ENCODE measurements at regions of chr1 and their contacts with region 1.

Region 1: GRCh38 chr1:25487628-25488027 is 55.8 kb upstream of the LDLRAP1 start:
- DNase-seq: no peak
- ATAC-seq: peak; percentile 74
- H3K4me3 ChIP-seq: no peak overlapping the region
- H3K27ac ChIP-seq: no peak overlapping the region
- H3K4me1 ChIP-seq: no peaks in the 10 kb centered on the region
- H3K27me3 ChIP-seq: no peaks in the 10 kb centered on the region
- CTCF ChIP-seq: peak; percentile 37 to 63 (median 49); a peak in 5 of 6 replicates
- EP300 ChIP-seq: no peak
- POLR2A ChIP-seq: no peak
- RAD21 ChIP-seq: peak; percentile 31; the same call in 1 of the 2 replicates

Region 2: DNA sequence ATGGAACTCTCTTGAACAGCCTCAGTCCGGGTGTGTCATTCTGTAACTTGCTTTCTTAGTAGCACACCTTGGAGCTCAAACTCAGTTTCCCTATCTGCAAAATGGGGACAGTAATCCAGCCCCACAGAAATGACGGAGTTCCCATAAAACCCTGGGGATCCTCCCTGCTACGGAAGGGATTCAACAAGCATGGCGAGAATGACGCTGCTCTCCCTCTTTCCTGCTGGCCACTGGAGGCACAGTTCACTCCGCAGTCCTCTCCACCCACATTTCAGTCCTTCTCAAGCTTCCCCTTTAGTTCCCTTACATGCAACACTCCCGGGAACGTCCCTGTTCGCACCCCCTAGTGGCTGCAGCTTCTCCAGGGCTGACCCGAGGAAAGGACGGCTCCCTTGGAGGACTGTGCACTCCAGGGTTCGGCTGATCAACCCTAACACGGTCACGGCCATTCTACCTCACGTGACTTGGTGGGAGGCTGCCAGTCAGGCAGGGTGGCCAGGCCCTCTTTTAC is 578.2 kb before region 1 on chr1:
- CTCF ChIA-PET with region 1: no interaction called
- POLR2A ChIA-PET with region 1: no interaction called
- RAD21 ChIA-PET with region 1: no interaction called
- SMC1A ChIA-PET with region 1: no interaction called
- in situ Hi-C with region 1: no loop called
- intact Hi-C with region 1: no loop called
- DNase-seq: no peak
- ATAC-seq: no peak
- H3K4me3 ChIP-seq: no peak overlapping the region
- H3K27ac ChIP-seq: no peak overlapping the region
- H3K4me1 ChIP-seq: no peaks in the 10 kb centered on the region
- H3K27me3 ChIP-seq: no peaks in the 10 kb centered on the region
- CTCF ChIP-seq: 0 out of 6 replicates have a peak, but pooled peaks of 1 of the 3 experiments have one; percentile 3
- EP300 ChIP-seq: no peak
- POLR2A ChIP-seq: peak; percentile 54; the same call in 1 of the 2 replicates
- RAD21 ChIP-seq: no peak

Region 3: DNA sequence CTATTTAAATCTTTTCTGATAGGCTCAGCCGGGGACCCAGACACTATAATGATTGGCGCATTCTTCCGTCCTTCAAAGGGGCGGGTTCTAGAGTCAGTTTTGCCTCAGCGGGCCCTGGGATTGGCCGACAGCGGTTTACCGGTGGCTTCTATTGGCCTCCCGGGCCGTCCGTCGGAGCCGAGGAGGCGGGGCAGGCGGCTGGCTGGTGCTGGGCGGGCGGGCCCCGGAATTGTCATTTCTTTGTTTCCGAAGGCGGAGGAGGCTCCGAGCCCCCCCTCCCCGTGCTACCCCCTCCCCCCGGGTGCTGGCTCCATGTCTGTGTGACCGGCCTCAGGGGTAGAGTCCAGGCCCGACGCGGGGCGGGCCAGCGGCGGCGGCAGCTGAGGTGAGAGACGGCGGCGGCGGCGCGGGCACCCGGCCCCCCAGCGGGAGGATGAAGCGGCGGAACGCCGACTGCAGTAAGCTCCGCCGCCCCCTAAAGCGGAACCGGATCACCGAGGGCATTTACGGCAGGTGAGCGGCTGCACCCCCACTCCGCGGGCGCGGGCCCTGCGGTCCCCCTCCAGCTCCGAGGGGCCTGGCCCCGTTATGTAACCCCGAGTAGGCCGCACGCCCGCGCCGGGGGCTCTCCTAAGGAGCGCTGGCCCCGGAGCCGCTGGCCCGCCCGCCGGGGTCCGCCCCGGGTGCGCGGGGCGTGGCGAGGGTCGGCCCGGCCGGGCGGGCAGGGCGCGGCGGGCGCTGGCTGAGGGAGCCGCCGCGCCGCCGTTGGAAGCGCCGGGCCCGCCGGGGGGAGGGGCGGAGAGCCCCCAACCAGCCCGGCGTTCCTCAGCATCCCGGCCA is 56.7 kb before region 1 on chr1 and contains the start of gene MACO1:
- CTCF ChIA-PET with region 1: interaction called, 36 read pairs
- POLR2A ChIA-PET with region 1: interaction called, 5 read pairs
- RAD21 ChIA-PET with region 1: interaction called, 12 read pairs
- SMC1A ChIA-PET with region 1: interaction called, 69 read pairs
- in situ Hi-C with region 1: no loop called
- intact Hi-C with region 1: loop called (anchors 2 kb)
- DNase-seq: peak; percentile 75
- ATAC-seq: peak; percentile 94
- H3K4me3 ChIP-seq: peak within 1 kb of the TSS; percentile 79
- H3K27ac ChIP-seq: peak within 1 kb of the TSS; percentile 56
- H3K4me1 ChIP-seq: peaks cover 7% of the 10 kb centered on the region
- H3K27me3 ChIP-seq: no peaks in the 10 kb centered on the region
- CTCF ChIP-seq: no peak
- EP300 ChIP-seq: no peak
- POLR2A ChIP-seq: peak; percentile 58; the same call in 1 of the 2 replicates
- RAD21 ChIP-seq: no peak
- polyA plus RNA-seq, gene MACO1: 3.2 to 4.2 TPM

Region 4: GRCh38 chr1:25447547-25447946 is 40.1 kb before region 1 on chr1:
- CTCF ChIA-PET with region 1: interaction called, 49 read pairs
- POLR2A ChIA-PET with region 1: interaction called, 4 read pairs
- RAD21 ChIA-PET with region 1: interaction called, 6 read pairs
- SMC1A ChIA-PET with region 1: interaction called, 6 read pairs
- in situ Hi-C with region 1: no loop called
- intact Hi-C with region 1: no loop called
- DNase-seq: peak; percentile 79
- ATAC-seq: peak; percentile 94
- H3K4me3 ChIP-seq: no peak overlapping the region
- H3K27ac ChIP-seq: peak overlapping the region; percentile 62; the same call in 1 of the 2 replicates
- H3K4me1 ChIP-seq: peaks cover 37% of the 10 kb centered on the region
- H3K27me3 ChIP-seq: no peaks in the 10 kb centered on the region
- CTCF ChIP-seq: no peak
- EP300 ChIP-seq: peak; percentile 70 to 93
- POLR2A ChIP-seq: no peak
- RAD21 ChIP-seq: no peak

Region 5: DNA sequence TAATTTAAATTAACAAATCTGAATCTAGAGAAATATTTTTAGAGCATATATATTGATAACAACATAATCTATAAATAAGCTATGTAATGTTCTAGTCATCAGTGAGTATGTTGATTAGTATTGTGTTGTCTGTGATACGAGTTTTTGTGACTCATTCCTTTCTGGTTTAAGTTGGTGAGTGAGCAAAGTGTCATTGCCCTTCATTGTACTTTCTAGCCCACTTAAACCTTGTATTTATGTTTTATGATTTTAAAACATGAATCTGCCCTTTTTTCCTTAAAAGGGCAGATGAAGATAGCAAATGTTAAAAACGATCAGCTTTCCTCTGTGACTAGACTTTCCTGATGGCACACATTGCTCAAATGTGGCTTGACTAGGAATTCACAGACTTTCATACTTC is 18.5 kb before region 1 on chr1:
- CTCF ChIA-PET with region 1: interaction called, 20 read pairs
- POLR2A ChIA-PET with region 1: no interaction called
- RAD21 ChIA-PET with region 1: interaction called, 7 read pairs
- SMC1A ChIA-PET with region 1: interaction called, 6 read pairs
- in situ Hi-C with region 1: no loop called
- intact Hi-C with region 1: no loop called
- DNase-seq: no peak
- ATAC-seq: no peak
- H3K4me3 ChIP-seq: no peak overlapping the region
- H3K27ac ChIP-seq: no peak overlapping the region
- H3K4me1 ChIP-seq: peaks cover 11% of the 10 kb centered on the region
- H3K27me3 ChIP-seq: no peaks in the 10 kb centered on the region
- CTCF ChIP-seq: no peak
- EP300 ChIP-seq: no peak
- POLR2A ChIP-seq: no peak
- RAD21 ChIP-seq: no peak

Region 6: DNA sequence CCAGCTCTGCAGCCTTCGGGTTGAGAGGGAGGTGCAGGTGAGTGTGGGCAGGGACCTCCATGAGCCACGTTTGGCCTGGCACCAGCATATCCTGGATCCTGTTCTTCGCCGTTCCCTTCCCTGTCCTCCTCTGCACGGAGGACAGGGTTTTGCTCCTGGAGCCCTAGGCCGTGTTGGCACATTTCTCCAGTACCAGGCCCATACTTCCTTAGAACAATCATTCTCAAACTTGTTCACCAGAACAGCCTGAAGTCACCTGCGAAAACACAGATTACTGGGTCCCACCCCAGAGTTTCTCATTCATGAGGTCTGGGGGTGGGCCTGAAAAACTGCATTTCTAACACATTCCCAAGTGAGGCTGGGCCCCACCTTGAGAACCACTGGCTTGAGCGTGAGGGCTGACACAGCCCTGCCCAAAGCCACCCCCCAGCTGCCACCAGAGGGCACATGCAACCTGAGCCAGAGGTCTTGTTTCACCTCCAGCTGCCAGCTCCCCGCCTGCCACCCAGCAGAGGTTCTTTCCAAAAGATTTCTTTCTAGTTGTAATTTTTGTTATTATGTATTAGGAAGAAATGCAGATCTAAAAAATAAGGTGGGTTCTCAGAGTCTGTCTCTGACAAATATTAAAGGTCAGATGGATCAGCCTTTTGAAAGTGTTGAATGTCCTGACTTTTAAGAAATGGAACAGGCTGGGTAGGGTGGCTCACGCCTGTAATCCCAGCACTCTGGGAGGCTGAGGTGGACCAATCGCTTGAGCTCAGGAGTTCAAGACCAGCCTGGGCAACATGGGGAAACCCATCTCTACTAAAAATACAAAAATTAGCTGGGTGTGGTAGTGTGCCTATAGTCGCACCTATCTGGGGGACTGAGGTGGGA is 16.2 kb after region 1 on chr1:
- CTCF ChIA-PET with region 1: interaction called, 38 read pairs
- POLR2A ChIA-PET with region 1: no interaction called
- RAD21 ChIA-PET with region 1: no interaction called
- SMC1A ChIA-PET with region 1: interaction called, 13 read pairs
- in situ Hi-C with region 1: no loop called
- intact Hi-C with region 1: no loop called
- DNase-seq: no peak
- ATAC-seq: peak; percentile 98
- H3K4me3 ChIP-seq: no peak overlapping the region
- H3K27ac ChIP-seq: no peak overlapping the region
- H3K4me1 ChIP-seq: no peaks in the 10 kb centered on the region
- H3K27me3 ChIP-seq: no peaks in the 10 kb centered on the region
- CTCF ChIP-seq: peak; percentile 56 to 72 (median 71)
- EP300 ChIP-seq: no peak
- POLR2A ChIP-seq: no peak
- RAD21 ChIP-seq: peak; percentile 40; the same call in 1 of the 2 replicates

Region 7: DNA sequence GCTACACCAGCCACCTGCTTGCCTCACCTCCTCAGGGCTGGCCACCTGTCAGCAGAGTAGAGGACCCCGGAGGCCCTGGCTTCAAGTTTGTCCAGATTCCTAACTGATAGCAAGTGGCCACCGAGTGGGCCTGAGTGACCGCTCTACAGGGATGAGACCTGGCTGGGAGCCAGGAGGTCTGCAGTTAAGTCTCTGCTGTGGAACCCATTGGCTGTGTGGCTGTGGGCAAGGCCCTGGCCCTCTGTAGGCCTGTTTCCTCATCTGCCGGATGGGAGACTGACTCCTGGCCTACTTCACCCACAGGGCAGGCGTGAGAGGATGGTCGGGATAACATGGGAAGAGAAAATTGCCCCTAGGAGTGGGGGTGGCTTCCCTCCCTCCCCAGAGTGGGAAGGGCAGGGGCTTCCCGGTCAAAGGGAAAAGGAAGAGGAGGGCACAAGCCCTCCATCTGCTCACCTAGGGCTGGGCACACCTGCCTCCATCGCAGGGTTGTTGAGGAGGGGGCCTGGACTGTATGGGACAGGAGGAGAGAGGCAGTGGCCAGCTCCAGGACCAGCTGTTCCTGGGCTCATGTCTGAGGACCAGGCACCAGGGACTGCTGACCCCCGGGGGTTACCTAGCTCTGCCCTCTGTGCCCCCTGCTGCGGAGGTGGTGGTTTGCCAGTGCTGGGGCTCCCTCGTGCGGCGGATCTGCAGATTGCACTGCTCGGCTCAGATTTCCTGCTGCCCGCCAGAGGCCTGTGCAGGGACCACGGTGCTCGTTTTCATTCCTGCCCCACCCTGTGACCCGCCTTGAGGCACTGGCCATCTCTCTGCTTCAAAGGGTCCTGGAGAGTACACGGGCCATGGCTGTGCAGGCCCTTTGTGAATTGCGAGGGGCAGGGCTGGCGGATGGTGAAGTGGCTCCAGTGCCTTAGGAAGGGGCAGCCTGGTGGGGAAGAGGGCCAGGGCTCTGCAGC is 323.0 kb after region 1 on chr1:
- CTCF ChIA-PET with region 1: interaction called, 10 read pairs
- POLR2A ChIA-PET with region 1: no interaction called
- RAD21 ChIA-PET with region 1: no interaction called
- SMC1A ChIA-PET with region 1: interaction called, 5 read pairs
- in situ Hi-C with region 1: no loop called
- intact Hi-C with region 1: no loop called
- DNase-seq: no peak
- ATAC-seq: peak; percentile 91
- H3K4me3 ChIP-seq: no peak overlapping the region
- H3K27ac ChIP-seq: no peak overlapping the region
- H3K4me1 ChIP-seq: peaks cover 7% of the 10 kb centered on the region
- H3K27me3 ChIP-seq: no peaks in the 10 kb centered on the region
- CTCF ChIP-seq: peak; percentile 86 to 97 (median 95); a peak in 5 of 6 replicates
- EP300 ChIP-seq: no peak
- POLR2A ChIP-seq: no peak
- RAD21 ChIP-seq: peak; percentile 94